Psoas muscle (tissue), 8 donors: ENCODE measurements at regions of chr5 and their contacts with region 1.

Region 1: DNA sequence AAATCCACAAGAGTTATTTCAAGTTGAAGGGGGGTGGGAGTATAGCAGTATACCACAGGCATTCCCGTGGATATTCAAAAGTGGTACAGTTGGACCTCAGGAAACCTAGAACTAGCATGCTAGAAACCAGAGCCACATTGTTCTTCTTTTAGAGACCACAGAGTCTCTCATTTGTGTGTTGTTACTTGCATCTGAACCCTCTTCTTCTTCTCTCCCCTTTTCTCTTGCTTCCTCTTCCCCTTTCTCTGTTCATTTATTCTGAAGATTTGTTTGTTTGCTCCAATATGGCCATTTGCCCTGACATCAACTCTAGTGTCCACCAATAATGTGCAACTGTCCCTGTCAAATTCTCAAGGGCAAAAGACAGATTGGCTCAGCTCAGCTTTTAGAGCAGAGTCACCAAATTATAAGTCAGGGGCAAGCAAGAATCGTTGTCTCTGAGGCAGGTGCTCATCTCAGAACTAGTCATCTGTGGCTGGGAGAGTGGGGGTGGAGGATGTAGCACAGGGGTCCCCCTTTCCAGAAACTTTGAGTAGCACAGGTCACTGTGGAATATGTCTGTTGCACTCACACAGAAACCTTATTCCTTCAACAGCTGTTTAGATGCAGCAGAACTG is 321.1 kb downstream of the ARRDC3 start:
- DNase-seq: no peak
- ATAC-seq: no peak
- H3K4me3 ChIP-seq: no peak overlapping the region
- H3K27ac ChIP-seq: no peak overlapping the region
- H3K4me1 ChIP-seq: no peaks in the 10 kb centered on the region
- H3K27me3 ChIP-seq: peaks cover 0 to 4% (median 0%) of the 10 kb centered on the region in 3 donors
- CTCF ChIP-seq: no peak

Region 2: GRCh38 chr5:91007251-91007650 is 54.8 kb before region 1 on chr5:
- intact Hi-C with region 1: loop called in 1 of 2 experiments (anchors 2 kb)
- DNase-seq: no peak
- ATAC-seq: no peak
- H3K4me3 ChIP-seq: no peak overlapping the region
- H3K27ac ChIP-seq: no peak overlapping the region
- H3K4me1 ChIP-seq: no peaks in the 10 kb centered on the region
- H3K27me3 ChIP-seq: no peaks in the 10 kb centered on the region
- CTCF ChIP-seq: no peak

Region 3: DNA sequence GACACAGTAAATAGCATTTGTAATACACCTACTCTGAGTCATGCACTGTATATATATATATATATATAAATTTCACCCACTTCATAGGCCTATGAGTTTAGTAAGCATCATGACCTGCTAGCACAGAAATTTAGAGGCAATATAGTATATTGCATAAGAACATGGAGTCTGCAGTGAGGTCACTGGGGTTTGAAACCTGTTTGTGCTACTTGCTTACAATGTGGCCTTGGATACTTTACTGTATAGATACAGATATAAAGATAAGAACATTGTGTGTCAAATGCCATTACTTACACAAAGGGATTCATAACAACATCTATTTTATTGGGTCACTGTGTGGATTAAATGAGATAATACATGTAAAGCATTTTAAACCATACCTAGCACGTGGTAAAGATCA is 1123.5 kb after region 1 on chr5:
- intact Hi-C with region 1: no loop called
- DNase-seq: no peak
- ATAC-seq: no peak
- H3K4me3 ChIP-seq: no peak overlapping the region
- H3K27ac ChIP-seq: no peak overlapping the region
- H3K4me1 ChIP-seq: no peaks in the 10 kb centered on the region
- H3K27me3 ChIP-seq: no peaks in the 10 kb centered on the region
- CTCF ChIP-seq: no peak